Esophagus squamous epithelium (tissue), 5 donors: ENCODE measurements at regions of chr5 and their contacts with region 1.

Region 1: DNA sequence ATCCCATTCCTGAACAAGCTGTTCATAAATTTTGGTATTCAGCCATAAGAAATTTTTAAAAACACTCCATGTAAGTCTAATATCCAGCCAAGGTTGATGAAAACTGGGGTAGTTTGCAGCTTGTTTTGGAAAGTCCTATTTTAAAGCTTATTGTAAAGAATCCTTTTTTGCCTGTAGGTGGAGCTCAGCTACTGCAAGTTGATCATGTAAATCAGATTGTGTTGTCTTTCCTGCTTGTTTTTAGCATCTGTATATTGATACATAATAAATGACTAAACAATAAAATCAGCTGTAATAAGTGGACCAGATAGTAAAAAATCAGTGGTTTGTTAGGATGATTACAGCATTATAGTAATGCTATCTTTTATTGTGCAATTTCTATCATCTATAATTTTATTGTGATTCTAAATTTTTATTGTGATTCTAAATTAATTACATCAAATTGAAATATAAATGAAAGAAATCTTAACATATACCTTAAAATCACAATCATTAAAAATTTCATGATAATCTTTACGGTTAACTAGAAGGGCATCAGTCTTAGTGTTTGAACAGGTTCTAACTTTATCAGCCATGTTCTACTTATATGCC is 42.4 kb downstream of the CWC27 start:
- DNase-seq: no peak
- H3K4me3 ChIP-seq: no peak overlapping the region
- H3K27ac ChIP-seq: no peak overlapping the region
- H3K4me1 ChIP-seq: no peaks in the 10 kb centered on the region
- H3K27me3 ChIP-seq: no peaks in the 10 kb centered on the region
- CTCF ChIP-seq: peak in 5 of 6 experiments; percentile 40 to 77 (median 62)
- POLR2A ChIP-seq: no peak

Region 2: GRCh38 chr5:64566310-64566916 is 244.7 kb before region 1 on chr5:
- intact Hi-C with region 1: no loop called
- DNase-seq: no peak
- H3K4me3 ChIP-seq: no peak overlapping the region
- H3K27ac ChIP-seq: no peak overlapping the region
- H3K4me1 ChIP-seq: peaks cover 0 to 5% (median 0%) of the 10 kb centered on the region in 3 donors
- H3K27me3 ChIP-seq: no peaks in the 10 kb centered on the region
- CTCF ChIP-seq: no peak
- POLR2A ChIP-seq: no peak

Region 3: GRCh38 chr5:64958757-64959391 is 147.7 kb after region 1 on chr5:
- intact Hi-C with region 1: loop called (anchors 10 kb)
- DNase-seq: no peak
- H3K4me3 ChIP-seq: no peak overlapping the region
- H3K27ac ChIP-seq: no peak overlapping the region
- H3K4me1 ChIP-seq: no peaks in the 10 kb centered on the region
- H3K27me3 ChIP-seq: no peaks in the 10 kb centered on the region
- CTCF ChIP-seq: peak in 5 of 6 experiments; percentile 21 to 45 (median 43)
- POLR2A ChIP-seq: no peak

Region 4: GRCh38 chr5:65481635-65482295 is 670.6 kb after region 1 on chr5 and contains the start of gene ADAMTS6:
- intact Hi-C with region 1: loop called (anchors 10 kb)
- DNase-seq: peak; percentile 45
- H3K4me3 ChIP-seq: peak within 1 kb of the TSS; percentile 39 to 78 (median 53)
- H3K27ac ChIP-seq: peak within 1 kb of the TSS; percentile 65 to 92 (median 88)
- H3K4me1 ChIP-seq: peaks cover 0 to 34% (median 3%) of the 10 kb centered on the region in 3 donors
- H3K27me3 ChIP-seq: no peaks in the 10 kb centered on the region
- CTCF ChIP-seq: no peak
- POLR2A ChIP-seq: peak in 1 of 4 donors; percentile 56
- total RNA-seq, gene ADAMTS6: 0.23 to 3.8 (median 1.0) TPM